Panc1 (cell line): ENCODE measurements at regions of chr5 and their contacts with region 1.

Region 1: DNA sequence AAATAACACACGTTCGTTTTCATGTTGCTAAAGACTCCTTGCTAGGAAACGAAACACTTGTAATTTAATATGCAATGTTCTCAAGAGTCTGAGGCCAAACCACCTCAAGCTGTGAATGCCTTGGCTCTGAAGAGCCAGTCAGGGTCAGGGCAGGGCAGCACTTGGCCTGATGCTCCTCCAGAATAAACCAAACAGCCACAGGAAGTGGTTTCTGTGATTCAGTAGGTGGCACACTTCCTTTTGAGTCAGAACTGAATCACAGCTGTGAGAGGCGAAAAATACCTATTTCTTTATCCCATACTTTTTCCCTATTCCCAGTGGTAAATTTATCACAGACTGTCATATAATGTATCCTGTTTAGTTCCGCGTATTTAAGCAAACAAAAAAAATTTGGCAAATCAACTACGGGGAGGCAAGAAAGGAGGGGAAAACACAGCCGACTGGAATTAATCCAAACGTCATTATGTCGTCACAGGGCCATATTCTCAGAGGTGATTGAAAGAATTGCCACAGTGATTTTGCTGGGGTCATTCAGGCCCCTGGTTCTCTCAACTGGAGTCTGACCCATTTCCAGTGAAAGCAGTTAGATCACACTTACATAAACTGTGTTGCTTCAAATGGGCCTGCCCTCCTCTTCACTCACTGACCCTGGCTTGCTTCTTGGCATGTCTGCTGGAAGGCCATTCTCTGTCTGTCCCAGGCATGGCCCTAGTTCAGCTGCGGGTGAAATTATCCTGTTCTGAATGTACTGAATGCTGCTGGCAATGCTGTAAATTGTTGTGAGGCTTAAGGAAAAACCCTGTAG is 71.2 kb downstream of the ARRDC3 start:
- DNase-seq: peak; percentile 97
- ATAC-seq: peak; percentile 94
- H3K4me3 ChIP-seq: no peak overlapping the region
- H3K27ac ChIP-seq: peak overlapping the region; percentile 91
- H3K4me1 ChIP-seq: peaks cover 42% of the 10 kb centered on the region
- H3K27me3 ChIP-seq: no peaks in the 10 kb centered on the region
- CTCF ChIP-seq: no peak

Region 2: DNA sequence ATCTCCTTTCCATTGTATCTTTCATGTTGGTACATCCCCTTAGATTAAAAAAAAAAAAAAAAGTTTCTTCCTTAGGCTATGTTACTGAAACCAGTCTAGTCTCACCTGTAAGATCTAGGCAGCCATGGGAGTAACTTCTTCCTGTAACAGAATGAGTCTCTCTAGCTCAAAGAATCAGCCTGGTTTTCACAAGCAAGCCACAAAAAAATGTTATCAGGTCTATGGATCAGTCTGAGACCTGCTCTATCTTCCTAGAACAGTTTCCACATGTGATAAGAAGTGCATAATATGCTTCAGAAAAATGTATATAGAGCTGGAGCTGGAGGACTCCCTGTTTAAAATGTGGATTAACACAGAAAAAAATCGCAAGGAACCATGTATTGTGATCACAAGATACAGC is 17.4 kb after region 1 on chr5:
- CTCF ChIA-PET with region 1: no interaction called
- POLR2A ChIA-PET with region 1: interaction called, 10 read pairs
- in situ Hi-C with region 1: no loop called
- intact Hi-C with region 1: no loop called
- DNase-seq: no peak
- ATAC-seq: no peak
- H3K4me3 ChIP-seq: no peak overlapping the region
- H3K27ac ChIP-seq: peak overlapping the region; percentile 48; the same call in 1 of the 2 replicates
- H3K4me1 ChIP-seq: peaks cover 10% of the 10 kb centered on the region
- H3K27me3 ChIP-seq: no peaks in the 10 kb centered on the region
- CTCF ChIP-seq: no peak